ENCODE measurements at regions of chr22 and their contacts with region 1.

Region 1: GRCh38 chr22:41381329-41382097 is at the start of gene TEF:
- DNase-seq: peak; percentile 99
- H3K4me3 ChIP-seq: peak within 1 kb of the TSS; percentile 51
- H3K4me3 Mint-ChIP-seq: peak within 1 kb of the TSS; percentile 86
- H3K27ac Mint-ChIP-seq: peak within 1 kb of the TSS; percentile 95
- H3K4me1 ChIP-seq: peaks cover 14% of the 10 kb centered on the region
- H3K4me1 Mint-ChIP-seq: peaks cover 7% of the 10 kb centered on the region
- H3K27me3 ChIP-seq: no peaks in the 10 kb centered on the region
- H3K27me3 Mint-ChIP-seq: no peaks in the 10 kb centered on the region
- CTCF ChIP-seq: no peak
- total RNA-seq, gene TEF: 13.8 and 17.8 TPM in 2 replicates

Region 2: DNA sequence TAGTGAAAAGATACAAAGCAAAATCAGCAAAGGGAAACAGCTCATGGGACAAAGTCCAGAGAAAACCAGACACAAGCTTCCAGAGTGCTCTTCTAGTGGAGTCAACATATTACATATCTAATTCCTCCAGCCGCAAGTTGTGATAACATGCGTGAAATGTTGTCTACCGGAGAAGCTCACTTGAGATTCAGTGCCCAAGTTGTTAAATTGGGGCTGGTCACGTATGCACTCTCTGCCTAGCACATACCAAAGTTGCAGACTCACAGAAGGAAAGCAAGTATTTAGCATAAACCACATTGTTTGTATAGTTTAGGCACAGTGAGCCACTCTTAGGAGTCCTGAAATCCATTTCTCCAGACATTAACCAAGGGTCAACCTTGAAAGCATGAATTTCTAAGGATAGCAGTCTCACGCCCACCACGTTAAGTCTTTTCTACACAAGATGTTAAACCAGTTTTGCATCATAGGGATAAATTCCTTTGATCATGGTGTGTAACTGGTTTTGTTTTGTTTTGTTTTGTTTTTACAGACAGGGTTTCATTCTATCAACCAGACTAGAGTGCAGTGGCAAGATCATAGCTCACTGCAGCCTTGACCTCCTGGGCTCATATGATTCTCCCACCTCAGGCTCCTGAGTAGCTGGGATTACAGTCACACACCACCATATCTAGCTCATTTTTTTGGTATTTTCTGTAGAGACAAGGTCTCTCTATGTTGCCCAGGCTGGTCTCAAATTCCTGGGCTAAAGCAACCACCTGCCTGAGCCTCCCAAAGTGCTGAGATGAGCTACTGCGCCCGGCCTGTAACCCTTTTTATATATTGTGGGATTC is 328.6 kb before region 1 on chr22:
- CTCF ChIA-PET with region 1: no interaction called
- POLR2A ChIA-PET with region 1: no interaction called
- intact Hi-C with region 1: no loop called
- DNase-seq: peak in 1 of 2 experiments; percentile 49
- H3K4me3 ChIP-seq: no peak overlapping the region
- H3K4me3 Mint-ChIP-seq: no peak overlapping the region
- H3K27ac Mint-ChIP-seq: no peak overlapping the region
- H3K4me1 ChIP-seq: peaks cover 31% of the 10 kb centered on the region
- H3K4me1 Mint-ChIP-seq: peaks cover 14% of the 10 kb centered on the region
- H3K27me3 ChIP-seq: no peaks in the 10 kb centered on the region
- H3K27me3 Mint-ChIP-seq: no peaks in the 10 kb centered on the region
- CTCF ChIP-seq: no peak

Region 3: GRCh38 chr22:41177040-41177621 is 204.4 kb before region 1 on chr22:
- CTCF ChIA-PET with region 1: no interaction called
- POLR2A ChIA-PET with region 1: no interaction called
- intact Hi-C with region 1: no loop called
- DNase-seq: no peak
- H3K4me3 ChIP-seq: no peak overlapping the region
- H3K4me3 Mint-ChIP-seq: no peak overlapping the region
- H3K27ac Mint-ChIP-seq: no peak overlapping the region
- H3K4me1 ChIP-seq: peaks cover 4% of the 10 kb centered on the region
- H3K4me1 Mint-ChIP-seq: peaks cover 7% of the 10 kb centered on the region
- H3K27me3 ChIP-seq: no peaks in the 10 kb centered on the region
- H3K27me3 Mint-ChIP-seq: no peaks in the 10 kb centered on the region
- CTCF ChIP-seq: no peak

Region 4: DNA sequence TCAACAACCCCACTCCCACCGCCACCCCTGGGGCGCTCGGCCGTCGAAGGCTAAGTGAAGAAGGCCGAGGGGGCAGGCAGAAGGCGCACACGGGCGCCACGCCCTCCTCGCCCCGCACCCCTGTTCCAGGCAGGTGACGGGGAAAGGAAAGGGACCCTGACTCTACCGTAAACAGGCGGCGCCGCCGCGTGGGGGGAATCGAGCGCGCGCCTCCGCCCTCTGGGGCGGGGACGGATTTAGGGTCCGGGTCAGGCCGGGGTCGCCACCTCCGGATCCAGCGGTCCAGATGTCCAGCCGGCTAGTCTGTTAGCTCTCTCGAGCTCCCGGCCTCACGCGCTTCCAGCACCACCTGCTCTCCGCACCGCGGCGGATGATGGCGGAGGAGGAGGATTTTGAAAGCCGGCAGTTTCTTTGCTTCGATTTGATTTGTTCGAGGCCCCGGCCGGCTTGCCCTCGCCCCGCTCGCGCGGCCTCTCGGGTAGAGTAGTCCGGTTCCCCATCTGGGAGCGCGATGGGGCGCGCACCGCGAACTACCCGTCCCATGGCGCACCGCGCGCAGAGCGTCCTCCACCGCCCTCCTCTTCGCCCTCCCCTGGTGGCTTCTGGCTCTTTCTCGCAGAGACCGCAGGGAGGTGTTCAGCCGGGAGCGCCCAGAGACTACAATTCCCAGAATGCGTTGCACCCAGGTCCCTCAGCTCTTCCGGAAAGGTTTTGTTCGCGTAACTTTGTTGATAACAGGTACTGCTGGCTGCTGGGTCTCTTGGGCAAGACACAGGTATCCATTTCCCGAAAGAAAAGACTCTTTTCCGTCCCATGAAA is 95.5 kb before region 1 on chr22 and contains the start of gene RANGAP1:
- CTCF ChIA-PET with region 1: interaction called, 3 read pairs
- POLR2A ChIA-PET with region 1: interaction called, 29 read pairs
- intact Hi-C with region 1: loop called (anchors 1 kb)
- DNase-seq: peak; percentile 98 to 99
- H3K4me3 ChIP-seq: peak within 1 kb of the TSS; percentile 78
- H3K4me3 Mint-ChIP-seq: peak within 1 kb of the TSS; percentile 88
- H3K27ac Mint-ChIP-seq: peak within 1 kb of the TSS; percentile 92
- H3K4me1 ChIP-seq: peaks cover 39% of the 10 kb centered on the region
- H3K4me1 Mint-ChIP-seq: peaks cover 32% of the 10 kb centered on the region
- H3K27me3 ChIP-seq: no peaks in the 10 kb centered on the region
- H3K27me3 Mint-ChIP-seq: no peaks in the 10 kb centered on the region
- CTCF ChIP-seq: peak in 1 of 2 experiments; percentile 23
- total RNA-seq, gene RANGAP1: 106 and 112 TPM in 2 replicates

Region 5: DNA sequence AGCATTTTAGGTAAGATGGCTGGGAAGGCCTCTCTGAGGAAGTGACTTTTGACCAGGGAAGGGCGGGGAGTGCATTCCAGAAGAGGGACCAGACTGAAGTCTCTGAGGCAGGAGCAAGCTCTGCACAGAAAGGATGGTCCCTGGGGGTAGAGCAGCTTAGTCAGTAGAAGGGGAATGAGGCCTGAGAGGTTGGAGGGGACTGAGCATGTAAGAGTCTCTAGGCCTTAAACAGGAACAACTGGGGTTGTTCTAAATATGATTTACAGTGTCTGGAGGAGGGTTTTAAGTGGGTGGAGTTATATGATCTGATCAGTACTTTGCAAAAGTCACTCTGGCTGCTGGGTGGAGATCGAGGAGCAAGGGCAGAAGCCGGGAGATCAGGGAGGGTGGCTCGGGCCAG is 31.4 kb before region 1 on chr22:
- CTCF ChIA-PET with region 1: interaction called, 9 read pairs
- POLR2A ChIA-PET with region 1: interaction called, 18 read pairs
- intact Hi-C with region 1: no loop called
- DNase-seq: peak; percentile 63 to 77
- H3K4me3 ChIP-seq: no peak overlapping the region
- H3K4me3 Mint-ChIP-seq: peak overlapping the region; percentile 62
- H3K27ac Mint-ChIP-seq: peak overlapping the region; percentile 86
- H3K4me1 ChIP-seq: peaks cover 35% of the 10 kb centered on the region
- H3K4me1 Mint-ChIP-seq: peaks cover 28% of the 10 kb centered on the region
- H3K27me3 ChIP-seq: no peaks in the 10 kb centered on the region
- H3K27me3 Mint-ChIP-seq: no peaks in the 10 kb centered on the region
- CTCF ChIP-seq: no peak

Region 6: GRCh38 chr22:41403532-41404318 is 22.2 kb after region 1 on chr22:
- CTCF ChIA-PET with region 1: interaction called, 22 read pairs
- POLR2A ChIA-PET with region 1: interaction called, 11 read pairs
- intact Hi-C with region 1: no loop called
- DNase-seq: peak; percentile 82 to 86
- H3K4me3 ChIP-seq: no peak overlapping the region
- H3K4me3 Mint-ChIP-seq: no peak overlapping the region
- H3K27ac Mint-ChIP-seq: no peak overlapping the region
- H3K4me1 ChIP-seq: no peaks in the 10 kb centered on the region
- H3K4me1 Mint-ChIP-seq: peaks cover 16% of the 10 kb centered on the region
- H3K27me3 ChIP-seq: no peaks in the 10 kb centered on the region
- H3K27me3 Mint-ChIP-seq: no peaks in the 10 kb centered on the region
- CTCF ChIP-seq: peak; percentile 90 to 94

Region 7: GRCh38 chr22:41418737-41419136 is 37.2 kb after region 1 on chr22:
- CTCF ChIA-PET with region 1: no interaction called
- POLR2A ChIA-PET with region 1: no interaction called
- intact Hi-C with region 1: no loop called
- DNase-seq: no peak
- H3K4me3 ChIP-seq: no peak overlapping the region
- H3K4me3 Mint-ChIP-seq: no peak overlapping the region
- H3K27ac Mint-ChIP-seq: no peak overlapping the region
- H3K4me1 ChIP-seq: peaks cover 6% of the 10 kb centered on the region; the same call in 1 of the 2 replicates
- H3K4me1 Mint-ChIP-seq: peaks cover 9% of the 10 kb centered on the region
- H3K27me3 ChIP-seq: no peaks in the 10 kb centered on the region
- H3K27me3 Mint-ChIP-seq: no peaks in the 10 kb centered on the region
- CTCF ChIP-seq: no peak

Region 8: DNA sequence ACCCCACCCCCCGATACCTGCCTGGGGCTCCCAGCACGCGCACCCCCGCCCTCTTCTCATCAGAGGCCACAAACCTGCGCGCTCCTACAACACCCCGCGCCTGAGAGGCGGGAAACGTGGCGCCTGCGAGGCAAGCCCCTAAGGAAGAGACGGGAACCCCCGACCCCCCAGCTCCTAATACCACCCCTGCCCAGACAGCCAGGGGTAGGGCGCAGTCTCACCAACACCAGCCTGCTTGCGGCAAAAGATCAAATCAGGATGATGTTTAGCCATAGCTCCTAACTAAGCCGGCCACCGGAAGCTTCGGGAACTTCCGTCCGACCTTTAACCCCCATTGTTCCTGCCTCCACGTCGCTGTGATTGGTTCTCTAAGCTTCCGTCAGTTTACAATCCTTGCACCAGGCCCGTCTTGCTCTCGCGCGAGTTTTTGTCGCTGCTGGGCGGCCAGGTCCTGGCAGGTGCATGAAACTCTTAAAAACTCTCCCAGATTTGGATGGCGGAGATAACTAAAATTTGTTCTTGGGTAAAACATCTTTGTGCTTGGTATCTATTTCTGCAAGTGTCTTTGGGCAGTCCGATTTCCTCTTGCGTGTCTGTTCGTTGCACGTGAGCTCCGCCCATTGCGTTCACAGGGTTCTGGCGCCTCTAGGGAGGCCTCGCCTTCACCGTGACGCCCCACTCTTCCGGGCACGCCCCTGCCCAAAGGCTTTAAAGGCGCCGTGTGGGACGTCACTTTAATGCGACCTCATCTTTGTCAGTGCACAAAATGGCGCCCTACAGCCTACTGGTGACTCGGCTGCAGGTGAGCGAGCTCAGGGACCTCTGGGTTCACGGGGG is 87.1 kb after region 1 on chr22 and contains the starts of genes ACO2 and PHF5A:
- CTCF ChIA-PET with region 1: no interaction called
- POLR2A ChIA-PET with region 1: interaction called, 29 read pairs
- intact Hi-C with region 1: no loop called
- DNase-seq: peak; percentile 97
- H3K4me3 ChIP-seq: peak within 1 kb of the TSS; percentile 96
- H3K4me3 Mint-ChIP-seq: peak within 1 kb of the TSS; percentile 92
- H3K27ac Mint-ChIP-seq: peak within 1 kb of the TSS; percentile 100
- H3K4me1 ChIP-seq: peaks cover 18% of the 10 kb centered on the region
- H3K4me1 Mint-ChIP-seq: peaks cover under 1% of the 10 kb centered on the region
- H3K27me3 ChIP-seq: no peaks in the 10 kb centered on the region
- H3K27me3 Mint-ChIP-seq: no peaks in the 10 kb centered on the region
- CTCF ChIP-seq: no peak
- total RNA-seq, gene ACO2: 90.5 and 95.5 TPM in 2 replicates
- total RNA-seq, gene PHF5A: 75.4 and 78.6 TPM in 2 replicates

Region 9: GRCh38 chr22:41621099-41621910 is 239.8 kb after region 1 on chr22 and contains the start of gene XRCC6:
- CTCF ChIA-PET with region 1: no interaction called
- POLR2A ChIA-PET with region 1: interaction called, 10 read pairs
- intact Hi-C with region 1: no loop called
- DNase-seq: peak; percentile 99 to 100
- H3K4me3 ChIP-seq: peak within 1 kb of the TSS; percentile 98
- H3K4me3 Mint-ChIP-seq: peak within 1 kb of the TSS; percentile 90
- H3K27ac Mint-ChIP-seq: peak within 1 kb of the TSS; percentile 98
- H3K4me1 ChIP-seq: peaks cover 17% of the 10 kb centered on the region
- H3K4me1 Mint-ChIP-seq: no peaks in the 10 kb centered on the region
- H3K27me3 ChIP-seq: no peaks in the 10 kb centered on the region
- H3K27me3 Mint-ChIP-seq: no peaks in the 10 kb centered on the region
- CTCF ChIP-seq: no peak
- total RNA-seq, gene XRCC6: 413 and 414 TPM in 2 replicates

Measured in Caco-2 (cell line).